ENCODE measurements at regions of chr15 and their contacts with region 1.

Region 1: DNA sequence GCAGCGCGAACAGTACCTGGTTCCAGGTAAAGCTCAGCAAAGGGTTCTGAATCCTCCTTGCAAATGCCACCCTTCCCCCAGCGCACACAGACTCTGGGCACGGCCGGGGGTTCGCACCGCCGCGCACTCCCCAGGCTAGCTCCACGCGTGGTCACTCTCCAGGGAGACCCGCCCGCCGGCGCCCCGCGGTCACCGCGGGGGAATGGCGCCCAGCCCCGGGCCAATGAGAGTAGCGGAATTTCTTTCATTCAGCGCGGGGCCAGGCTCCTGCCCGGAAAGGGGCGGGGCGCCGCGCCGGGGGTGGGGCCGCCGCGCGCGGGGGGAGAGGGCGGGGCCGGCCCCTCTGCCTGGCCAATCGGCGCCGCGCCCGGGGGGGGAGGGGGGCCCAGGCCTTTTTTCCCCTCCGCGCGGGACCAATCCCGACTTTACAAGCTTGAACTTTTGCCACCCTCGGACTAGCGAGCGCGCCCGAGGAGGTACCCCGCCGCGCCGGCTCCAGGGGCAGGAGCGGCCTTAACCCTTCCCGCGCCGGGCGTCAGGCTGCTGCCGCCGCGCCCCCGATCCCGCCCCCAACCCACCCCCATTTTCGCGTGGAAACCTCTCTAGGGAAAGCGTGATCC is 1.1 kb upstream of the SMAD6 start:
- DNase-seq: peak; percentile 98
- ATAC-seq: peak; percentile 80

Region 2: DNA sequence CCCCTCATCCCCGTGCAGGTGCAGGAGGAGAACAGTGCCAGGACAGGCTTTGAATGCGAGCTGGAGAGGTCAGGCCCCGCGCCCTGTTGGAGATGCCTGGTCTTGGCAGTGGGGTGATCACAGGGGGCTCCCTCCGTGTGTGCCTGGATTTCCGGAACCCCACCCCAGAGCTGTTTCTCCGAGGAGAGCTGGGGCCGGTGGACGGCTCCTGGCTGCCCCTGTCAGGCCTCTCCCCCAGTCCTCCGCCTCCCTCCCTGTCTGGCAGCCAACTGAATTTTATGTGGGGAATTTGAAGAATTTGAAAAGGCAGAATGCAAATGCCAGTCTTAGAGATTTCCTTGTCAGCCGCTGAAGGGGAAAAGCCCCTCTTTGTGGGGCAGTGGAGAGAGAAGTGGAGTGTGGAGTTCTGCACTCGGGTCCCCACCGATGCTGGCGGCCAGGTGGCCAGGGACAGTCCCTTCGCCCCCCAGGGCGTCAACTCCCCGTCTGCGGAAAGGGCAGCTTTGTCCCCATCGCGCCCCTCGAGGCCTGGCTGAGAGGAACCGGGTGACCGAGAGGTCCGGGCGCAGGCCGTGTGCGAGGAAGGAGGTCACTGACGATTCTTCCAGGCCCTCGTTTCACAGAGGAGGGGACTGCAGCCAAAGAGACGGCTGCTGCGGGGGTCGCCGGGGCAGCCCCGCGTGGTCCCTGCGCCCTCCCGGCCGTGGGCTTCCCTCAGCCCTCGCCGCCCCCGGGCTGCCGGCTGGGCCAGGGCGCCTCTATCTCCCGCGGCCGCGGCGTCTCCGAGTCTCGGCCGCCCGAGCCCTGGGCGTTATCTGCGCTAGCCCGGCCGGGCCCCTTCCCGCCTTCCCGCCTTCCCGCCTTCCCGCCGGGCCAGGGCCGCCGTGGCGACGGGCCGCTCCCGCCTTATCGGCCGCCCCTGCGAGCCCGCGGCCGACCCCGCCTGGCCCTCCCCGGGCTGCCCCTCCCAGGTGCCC is 79.1 kb before region 1 on chr15:
- intact Hi-C with region 1: loop called (anchors 10 kb)
- DNase-seq: no peak
- ATAC-seq: peak; percentile 51

Region 3: GRCh38 chr15:66635817-66636216 is 65.1 kb before region 1 on chr15:
- intact Hi-C with region 1: no loop called
- DNase-seq: no peak
- ATAC-seq: no peak

Region 4: DNA sequence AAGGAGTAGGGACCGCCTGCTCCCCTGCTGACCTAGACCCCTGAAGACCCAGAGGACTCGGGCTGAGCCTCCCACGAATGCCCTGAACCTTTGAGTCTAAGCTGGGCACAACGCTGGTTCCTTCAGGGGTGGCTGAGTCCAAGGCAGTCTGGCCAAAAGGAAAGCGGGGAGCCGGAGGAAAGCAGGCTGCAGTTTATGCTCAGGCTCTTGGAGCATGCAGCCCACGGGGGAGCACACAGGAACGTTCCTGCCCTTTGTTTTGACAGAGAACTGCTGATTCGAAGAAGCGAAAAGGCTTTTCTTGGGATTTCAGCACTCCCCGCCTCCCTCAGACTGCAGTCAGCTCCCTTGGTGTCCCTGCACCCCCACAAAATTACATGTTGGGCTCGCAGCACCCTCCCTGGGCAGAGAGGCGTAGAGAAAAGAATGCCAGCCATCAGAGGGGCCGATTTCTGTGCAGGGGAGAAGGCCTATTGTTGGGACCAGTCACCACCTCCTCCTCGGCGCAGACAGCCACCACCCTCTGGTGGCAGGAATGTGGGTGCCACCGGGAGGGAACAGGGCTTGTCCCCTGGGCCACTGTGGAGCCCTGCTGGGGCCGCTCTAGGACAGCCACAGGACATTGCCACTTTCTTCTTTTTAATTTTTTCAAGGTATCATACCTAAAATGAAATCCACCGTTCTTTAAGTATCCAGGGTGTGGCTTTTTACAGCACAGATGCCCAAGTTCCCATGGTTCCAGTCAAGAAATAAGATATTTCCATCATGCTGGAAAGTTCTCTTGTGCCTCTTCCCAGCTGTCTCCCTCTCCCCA is 73.3 kb after region 1 on chr15:
- intact Hi-C with region 1: loop called (anchors 10 kb)
- DNase-seq: peak; percentile 91
- ATAC-seq: peak; percentile 96

Region 5: DNA sequence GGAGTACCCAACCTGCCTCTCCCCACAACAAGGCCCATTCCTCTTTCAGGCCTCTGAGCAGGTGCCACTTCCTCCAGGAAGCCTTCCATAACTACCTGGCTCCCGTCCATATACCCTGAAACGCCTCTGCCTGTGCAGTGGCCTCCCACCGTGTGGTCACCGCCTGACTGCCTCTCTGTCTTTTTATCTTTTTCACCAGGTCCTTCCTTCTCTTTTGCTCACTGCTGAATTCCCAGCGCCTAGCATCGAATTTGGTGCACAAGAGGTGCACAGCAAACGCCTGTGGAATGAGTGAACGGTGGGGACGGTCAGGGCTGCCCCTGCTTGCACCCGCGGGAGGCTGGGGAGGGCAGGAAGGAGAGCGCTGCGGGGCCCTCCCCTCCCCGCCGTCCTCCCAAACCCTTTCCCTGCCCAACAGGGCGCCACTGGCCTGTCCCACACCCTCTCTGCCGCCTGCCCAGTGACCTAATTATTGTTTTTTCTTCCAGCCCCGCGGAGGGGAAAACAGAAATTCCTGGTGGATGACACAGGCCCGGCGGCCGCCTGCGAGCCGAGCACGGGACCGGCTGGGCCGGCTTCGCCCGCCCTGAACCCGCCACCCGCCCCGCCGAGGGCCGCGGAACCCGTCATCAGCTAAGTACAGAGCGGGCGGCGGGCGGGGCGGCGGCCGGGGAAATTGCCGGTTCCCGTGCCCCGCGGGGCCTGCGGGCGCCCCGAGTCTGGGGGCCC is 141.2 kb after region 1 on chr15:
- intact Hi-C with region 1: loop called (anchors 10 kb)
- DNase-seq: peak; percentile 92
- ATAC-seq: peak; percentile 90